ENCODE measurements at regions of chr1 and their contacts with region 1.

Region 1: GRCh38 chr1:32773018-32773763 is 44.0 kb downstream of the YARS1 start:
- DNase-seq: peak; percentile 81 to 90 (median 86)
- ATAC-seq: peak; percentile 86
- H3K4me3 ChIP-seq: no peak overlapping the region
- H3K27ac ChIP-seq: no peak overlapping the region
- H3K4me1 ChIP-seq: peaks cover 6 to 36% of the 10 kb centered on the region in 2 experiments; a peak in 3 of 5 replicates
- H3K27me3 ChIP-seq: no peaks in the 10 kb centered on the region
- CTCF ChIP-seq: peak; percentile 98 to 99 (median 98)
- EP300 ChIP-seq: peak; percentile 43; the same call in 1 of the 2 replicates
- POLR2A ChIP-seq: no peak
- RAD21 ChIP-seq: peak; percentile 96 to 99

Region 2: GRCh38 chr1:32650752-32651460 is 122.3 kb before region 1 on chr1 and contains the start of gene RBBP4:
- CTCF ChIA-PET with region 1: no interaction called
- POLR2A ChIA-PET with region 1: interaction called, 12 read pairs
- in situ Hi-C with region 1: no loop called
- intact Hi-C with region 1: no loop called
- DNase-seq: peak; percentile 99 to 100 (median 100)
- ATAC-seq: peak; percentile 95
- H3K4me3 ChIP-seq: peak within 1 kb of the TSS; percentile 84
- H3K27ac ChIP-seq: peak within 1 kb of the TSS; percentile 100
- H3K4me1 ChIP-seq: peaks cover 22 to 23% of the 10 kb centered on the region in 2 experiments; a peak in 4 of 5 replicates
- H3K27me3 ChIP-seq: no peaks in the 10 kb centered on the region
- CTCF ChIP-seq: 0 out of 6 replicates have a peak, but pooled peaks of 1 of the 3 experiments have one; percentile 1
- EP300 ChIP-seq: no peak; the same call in 1 of the 2 replicates
- POLR2A ChIP-seq: peak; percentile 87
- RAD21 ChIP-seq: peak in 1 of 2 experiments; percentile 21; a peak in 2 of 4 replicates
- polyA plus RNA-seq, gene RBBP4: 248 to 285 TPM

Region 3: DNA sequence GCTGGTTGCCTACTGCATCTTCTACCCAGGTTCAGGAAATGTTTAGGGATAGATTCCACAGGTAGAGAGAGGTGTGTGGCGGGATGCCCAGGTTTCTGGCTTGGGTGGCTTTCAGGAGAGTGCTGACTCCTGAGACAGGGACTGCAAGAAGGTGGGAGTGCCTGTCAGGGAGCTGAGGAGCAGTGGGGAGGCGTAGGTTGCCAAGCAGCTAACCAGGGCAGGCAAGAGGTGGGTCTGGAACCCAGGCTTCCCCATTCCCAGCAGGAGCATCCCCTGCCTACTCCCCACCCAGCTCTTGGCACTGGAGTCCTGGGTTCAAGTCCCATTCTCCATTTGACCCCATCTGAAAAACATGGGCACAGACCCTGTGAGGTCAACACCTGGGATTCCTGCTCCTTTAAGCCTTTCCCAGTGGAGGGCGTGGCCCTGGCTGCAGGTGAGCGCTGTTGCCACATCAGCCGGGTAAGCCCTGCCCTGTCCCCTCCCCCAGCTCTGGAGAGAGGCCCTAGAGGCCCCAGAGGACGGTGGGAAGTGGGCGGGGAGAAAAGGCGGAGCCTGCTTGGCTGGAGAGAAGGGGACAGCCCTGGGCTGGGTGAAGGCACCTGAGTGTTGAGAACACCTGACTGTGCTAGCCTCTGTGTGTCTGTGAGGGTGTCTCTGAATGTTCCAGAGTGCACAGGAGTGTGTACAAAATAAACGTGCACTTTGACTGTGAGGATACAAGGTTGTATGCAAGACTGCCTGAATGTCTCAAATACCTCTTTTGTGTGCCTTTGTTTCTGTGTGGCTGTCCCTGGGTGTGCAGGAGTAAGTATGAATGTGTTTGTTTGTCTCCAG is 56.7 kb before region 1 on chr1:
- CTCF ChIA-PET with region 1: interaction called, 99 read pairs
- POLR2A ChIA-PET with region 1: interaction called, 116 read pairs
- in situ Hi-C with region 1: loop called (anchors 10 kb)
- intact Hi-C with region 1: loop called (anchors 1 kb)
- DNase-seq: peak; percentile 95 to 97 (median 96)
- ATAC-seq: peak; percentile 96
- H3K4me3 ChIP-seq: no peak overlapping the region
- H3K27ac ChIP-seq: peak overlapping the region; percentile 68
- H3K4me1 ChIP-seq: peaks cover 18 to 49% of the 10 kb centered on the region in 2 experiments; a peak in 4 of 5 replicates
- H3K27me3 ChIP-seq: no peaks in the 10 kb centered on the region
- CTCF ChIP-seq: peak in 1 of 3 experiments; percentile 23; a peak in 2 of 6 replicates
- EP300 ChIP-seq: peak; percentile 52; the same call in 1 of the 2 replicates
- POLR2A ChIP-seq: no peak; the same call in 1 of the 2 replicates
- RAD21 ChIP-seq: peak in 1 of 2 experiments; percentile 22; a peak in 2 of 4 replicates

Region 4: DNA sequence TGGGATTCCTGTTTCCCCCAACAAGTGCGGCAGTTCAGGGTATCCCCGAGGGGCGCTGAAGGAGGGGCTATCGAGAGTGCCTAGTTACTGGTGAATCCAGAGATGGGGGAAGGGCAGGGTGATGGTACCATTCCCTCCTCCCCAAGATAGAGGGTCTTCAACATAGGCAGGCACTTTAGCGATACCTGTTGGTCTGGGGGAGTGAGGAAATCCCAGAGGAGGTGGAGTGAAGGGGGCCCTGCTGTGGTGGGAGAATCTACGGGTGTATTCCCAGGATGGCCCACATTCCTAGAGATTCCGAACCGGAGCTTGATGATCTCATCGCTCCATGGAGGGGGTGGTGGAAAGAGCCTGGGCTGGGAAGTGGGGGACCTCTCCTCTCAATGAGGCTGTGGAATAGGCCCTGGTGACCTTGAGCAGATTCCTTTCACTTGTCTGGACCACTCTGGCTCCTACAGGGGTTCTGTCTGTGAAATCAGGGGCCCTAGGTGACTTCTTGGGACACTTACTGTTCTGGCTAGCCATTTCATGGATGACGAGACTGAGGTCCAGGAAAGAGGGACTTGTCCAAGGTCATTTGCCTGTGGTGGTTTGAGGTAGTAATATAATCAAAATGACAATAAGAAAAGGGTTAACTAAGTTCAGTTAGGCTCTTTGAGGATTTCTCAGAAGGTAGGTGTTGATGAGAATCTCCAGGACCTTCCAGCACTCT is 17.9 kb before region 1 on chr1:
- CTCF ChIA-PET with region 1: no interaction called
- POLR2A ChIA-PET with region 1: interaction called, 22 read pairs
- in situ Hi-C with region 1: no loop called
- intact Hi-C with region 1: no loop called
- DNase-seq: peak in 1 of 4 experiments; percentile 49
- ATAC-seq: no peak
- H3K4me3 ChIP-seq: peak overlapping the region; percentile 61
- H3K27ac ChIP-seq: peak overlapping the region; percentile 82
- H3K4me1 ChIP-seq: peaks cover 61 to 71% of the 10 kb centered on the region in 2 experiments
- H3K27me3 ChIP-seq: no peaks in the 10 kb centered on the region
- CTCF ChIP-seq: no peak
- EP300 ChIP-seq: no peak
- POLR2A ChIP-seq: no peak
- RAD21 ChIP-seq: no peak

Region 5: DNA sequence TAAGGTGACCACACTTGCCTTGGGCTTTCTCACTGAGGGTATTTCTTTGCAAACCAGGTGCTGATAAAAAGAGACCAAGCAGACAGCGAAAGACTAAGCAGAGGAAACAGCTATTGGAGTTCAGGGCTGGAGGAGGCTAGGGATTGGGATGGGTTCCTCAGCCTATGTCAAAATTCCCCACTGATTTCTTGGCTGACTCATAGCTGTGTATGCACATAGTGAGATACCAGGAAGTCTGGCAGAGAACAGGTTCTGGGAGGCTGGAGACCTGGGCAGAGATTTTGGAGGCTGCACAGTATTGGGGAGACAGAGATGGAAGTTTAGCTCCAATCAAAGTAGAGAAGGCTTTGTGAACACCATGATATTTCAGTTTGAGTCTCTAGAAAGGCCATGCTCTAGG is 18.7 kb after region 1 on chr1:
- CTCF ChIA-PET with region 1: no interaction called
- POLR2A ChIA-PET with region 1: interaction called, 12 read pairs
- in situ Hi-C with region 1: no loop called
- intact Hi-C with region 1: no loop called
- DNase-seq: no peak
- ATAC-seq: no peak
- H3K4me3 ChIP-seq: no peak overlapping the region
- H3K27ac ChIP-seq: no peak overlapping the region
- H3K4me1 ChIP-seq: no peaks in the 10 kb centered on the region
- H3K27me3 ChIP-seq: no peaks in the 10 kb centered on the region
- CTCF ChIP-seq: no peak
- EP300 ChIP-seq: no peak
- POLR2A ChIP-seq: no peak
- RAD21 ChIP-seq: no peak

Measured in K562 (cell line).